Aorta (tissue), 5 donors: ENCODE measurements at regions of chr2 and their contacts with region 1.

Region 1: DNA sequence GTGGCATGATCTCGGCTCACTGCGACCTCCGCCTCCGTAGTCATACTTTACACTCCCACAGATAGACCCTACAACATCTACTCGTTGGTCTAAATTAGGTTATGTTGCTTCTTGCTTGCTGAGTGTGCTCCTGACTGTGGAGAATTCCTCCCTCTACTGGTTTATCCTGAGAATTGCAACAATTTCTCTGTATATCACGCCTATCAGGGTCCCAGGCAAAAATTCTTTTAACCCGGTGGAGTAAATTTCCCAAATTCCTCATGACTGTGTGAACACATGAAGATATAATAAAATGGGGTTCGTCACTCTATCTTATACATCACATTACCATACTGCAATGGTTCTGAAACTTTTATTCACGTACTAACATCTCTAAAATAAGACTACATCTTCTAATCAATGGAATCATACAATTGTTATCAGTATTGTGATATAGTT is 156.7 kb downstream of the EVA1A start:
- DNase-seq: no peak
- ATAC-seq: no peak
- H3K4me3 ChIP-seq: no peak overlapping the region
- H3K27ac ChIP-seq: no peak overlapping the region
- H3K4me1 ChIP-seq: no peaks in the 10 kb centered on the region
- H3K27me3 ChIP-seq: no peaks in the 10 kb centered on the region

Region 2: GRCh38 chr2:74685408-74685807 is 718.6 kb before region 1 on chr2:
- intact Hi-C with region 1: loop called (anchors 5 to 10 kb)
- DNase-seq: no peak
- ATAC-seq: no peak
- H3K4me3 ChIP-seq: no peak overlapping the region
- H3K27ac ChIP-seq: no peak overlapping the region
- H3K4me1 ChIP-seq: no peaks in the 10 kb centered on the region
- H3K27me3 ChIP-seq: no peaks in the 10 kb centered on the region

Region 3: GRCh38 chr2:74690571-74690970 is 713.4 kb before region 1 on chr2:
- intact Hi-C with region 1: loop called (anchors 5 to 10 kb)
- DNase-seq: no peak
- ATAC-seq: peak; percentile 87
- H3K4me3 ChIP-seq: no peak overlapping the region
- H3K27ac ChIP-seq: no peak overlapping the region
- H3K4me1 ChIP-seq: no peaks in the 10 kb centered on the region
- H3K27me3 ChIP-seq: no peaks in the 10 kb centered on the region

Region 4: DNA sequence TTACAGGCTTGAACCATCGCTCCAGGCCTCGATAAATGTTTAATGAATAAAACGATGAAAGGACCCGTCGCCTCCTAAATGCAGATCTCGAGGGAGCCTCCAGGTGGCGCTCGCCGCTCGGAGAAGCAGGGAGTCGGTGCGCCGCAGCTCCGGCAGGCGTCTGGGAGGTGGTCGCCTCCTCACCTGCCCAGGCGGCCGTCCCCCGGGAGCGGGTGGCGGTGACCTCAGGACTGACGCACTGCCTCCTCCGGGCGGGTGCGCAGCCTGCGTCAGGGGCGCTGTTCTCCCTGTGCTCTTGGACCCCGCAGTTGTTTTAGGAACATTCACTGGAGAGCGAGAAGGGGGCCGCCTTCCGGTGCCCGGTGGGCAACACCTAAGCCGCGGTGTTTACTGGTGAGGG is 484.2 kb before region 1 on chr2:
- intact Hi-C with region 1: loop called (anchors 2 to 10 kb)
- DNase-seq: peak; percentile 74 to 88
- ATAC-seq: peak; percentile 60
- H3K4me3 ChIP-seq: no peak overlapping the region
- H3K27ac ChIP-seq: no peak overlapping the region
- H3K4me1 ChIP-seq: no peaks in the 10 kb centered on the region
- H3K27me3 ChIP-seq: no peaks in the 10 kb centered on the region

Region 5: GRCh38 chr2:75064691-75065396 is 339.2 kb before region 1 on chr2:
- intact Hi-C with region 1: loop called in 1 of 2 experiments (anchors 10 kb)
- DNase-seq: peak; percentile 60 to 77
- ATAC-seq: no peak
- H3K4me3 ChIP-seq: no peak overlapping the region
- H3K27ac ChIP-seq: no peak overlapping the region
- H3K4me1 ChIP-seq: no peaks in the 10 kb centered on the region
- H3K27me3 ChIP-seq: no peaks in the 10 kb centered on the region

Region 6: DNA sequence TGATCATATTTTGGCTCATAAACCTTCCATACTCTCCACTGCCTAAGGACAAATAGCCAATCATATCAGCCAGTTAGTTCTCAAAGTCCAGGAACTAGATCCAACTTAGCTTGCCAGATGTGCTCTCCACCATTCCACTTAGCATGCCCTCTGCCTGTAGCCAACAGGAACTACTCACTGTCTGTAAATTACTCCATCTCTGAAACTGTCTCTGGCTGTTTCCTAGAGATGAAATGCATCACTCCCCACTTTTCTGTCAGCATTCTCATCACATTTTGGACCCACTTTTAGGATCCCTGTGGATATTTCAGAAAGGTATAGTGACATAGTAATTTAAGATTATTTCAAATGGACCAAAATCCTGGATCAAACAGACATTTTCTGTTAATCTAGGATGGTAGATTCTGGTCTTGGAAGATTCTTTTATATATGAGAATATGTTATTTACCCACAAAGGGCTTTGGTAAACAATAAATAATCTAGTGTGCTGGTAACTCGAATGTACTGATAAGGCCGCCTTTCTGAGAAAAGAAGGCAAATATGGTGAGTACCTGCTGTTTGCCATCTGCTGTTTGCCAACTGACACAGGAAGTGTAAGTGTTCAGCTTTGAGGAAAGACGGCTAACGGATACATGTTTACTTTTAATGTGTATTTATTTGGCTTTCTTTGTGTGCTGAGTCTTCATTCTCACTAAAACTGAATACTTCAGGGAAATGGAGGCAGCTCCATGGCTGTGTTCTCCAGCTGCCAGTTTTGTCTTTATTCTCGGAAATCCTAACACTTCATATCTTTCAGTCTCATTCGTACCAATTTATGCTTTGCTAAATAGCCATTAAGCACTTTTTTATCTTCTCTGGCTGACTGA is 77.2 kb after region 1 on chr2:
- intact Hi-C with region 1: no loop called
- DNase-seq: no peak
- ATAC-seq: no peak
- H3K4me3 ChIP-seq: no peak overlapping the region
- H3K27ac ChIP-seq: no peak overlapping the region
- H3K4me1 ChIP-seq: no peaks in the 10 kb centered on the region
- H3K27me3 ChIP-seq: no peaks in the 10 kb centered on the region